Naive thymus-derived CD4-positive, alpha-beta T cell (primary cell): ENCODE measurements at regions of chr15 and their contacts with region 1.

Region 1: DNA sequence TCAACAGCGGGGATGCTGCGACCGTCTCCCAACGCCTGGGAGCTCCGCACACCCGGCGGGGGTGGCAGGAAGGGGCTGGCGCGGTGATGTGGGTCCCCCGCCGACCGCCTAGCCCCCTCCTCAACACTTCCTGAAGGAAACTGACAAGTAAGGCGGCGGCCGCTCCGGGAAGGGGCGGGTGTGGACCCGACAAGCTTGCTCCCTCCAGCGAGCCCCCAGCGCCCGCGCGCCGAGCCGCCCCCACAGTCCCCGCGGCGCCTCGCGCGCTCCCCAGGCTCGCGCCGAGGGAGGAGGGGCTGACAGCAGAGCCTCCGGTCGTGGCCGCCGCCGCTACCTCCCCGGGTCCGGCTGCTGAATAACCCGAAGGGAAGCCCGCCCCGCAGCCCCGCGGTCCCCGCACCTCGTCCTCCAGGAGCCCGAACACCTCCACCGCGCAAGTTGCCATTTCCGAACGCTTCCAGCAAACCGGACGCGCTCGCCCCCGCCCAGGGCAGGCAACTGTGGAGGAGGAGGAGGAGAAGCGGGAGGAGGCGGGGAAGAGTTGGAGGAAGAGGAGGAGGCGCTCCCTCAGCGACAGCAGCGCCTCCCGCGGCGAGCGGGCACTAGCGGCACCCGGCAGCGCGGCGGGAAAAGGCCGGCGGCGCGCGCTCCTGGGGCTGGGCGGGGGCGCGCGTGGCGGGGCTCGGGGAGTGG is at the start of gene NEDD4:
- DNase-seq: peak; percentile 60 to 80 (median 68)
- ATAC-seq: peak; percentile 93
- H3K4me3 ChIP-seq: peak within 1 kb of the TSS; percentile 66
- H3K4me3 Mint-ChIP-seq: peak within 1 kb of the TSS; percentile 85 to 95 (median 90)
- H3K27ac ChIP-seq: no peak within 1 kb of the TSS
- H3K27ac Mint-ChIP-seq: peak within 1 kb of the TSS; percentile 7 to 92 (median 68)
- H3K4me1 ChIP-seq: no peaks in the 10 kb centered on the region
- H3K4me1 Mint-ChIP-seq: peaks cover 8 to 26% (median 18%) of the 10 kb centered on the region in 7 donors
- H3K27me3 ChIP-seq: no peaks in the 10 kb centered on the region
- H3K27me3 Mint-ChIP-seq: peaks cover 0 to 52% (median 0%) of the 10 kb centered on the region in 5 donors
- total RNA-seq, gene NEDD4: 3.3 to 15.1 (median 5.4) TPM

Region 2: DNA sequence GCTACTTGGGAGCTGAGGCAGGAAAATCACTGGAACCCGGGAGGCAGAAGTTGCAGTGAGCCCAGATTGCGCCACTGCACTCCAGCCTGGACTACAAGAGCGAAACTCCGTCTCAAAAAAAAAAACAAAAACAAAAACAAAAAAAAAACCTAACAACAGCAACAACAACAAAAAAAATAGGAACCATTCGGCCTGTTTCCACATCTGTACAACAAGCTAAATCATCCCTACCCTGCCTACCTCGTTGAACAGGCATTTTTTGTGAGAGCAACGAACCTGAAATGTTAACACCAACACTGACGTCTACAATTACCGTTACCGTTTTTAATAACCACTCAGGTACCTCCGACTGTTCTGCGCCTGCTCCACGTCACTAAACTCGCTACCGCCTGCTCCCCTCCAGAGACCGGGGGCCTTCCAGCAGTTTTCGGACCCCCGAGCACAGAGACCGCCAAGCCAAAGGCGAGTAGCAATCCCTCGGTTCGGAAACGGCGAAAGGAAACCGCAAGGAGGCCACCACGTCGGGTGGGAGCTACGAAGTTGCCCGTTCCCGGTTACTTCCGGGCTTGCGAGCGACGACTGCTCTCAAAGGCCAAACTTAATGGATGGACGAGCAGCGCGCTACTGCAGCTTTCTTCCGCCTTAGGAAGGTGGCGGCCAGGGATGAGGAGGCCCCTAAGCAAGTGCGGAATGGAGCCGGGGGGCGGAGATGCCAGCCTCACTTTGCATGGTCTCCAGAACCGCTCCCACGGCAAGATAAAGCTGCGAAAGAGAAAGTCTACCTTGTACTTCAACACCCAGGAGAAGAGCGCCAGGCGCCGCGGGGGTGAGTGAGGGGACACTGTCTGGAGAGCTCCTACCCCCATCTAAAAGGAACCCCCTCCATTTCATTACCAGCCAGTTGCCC is 674.4 kb before region 1 on chr15 and contains the starts of genes PIGB and PIGBOS1:
- CTCF ChIA-PET with region 1: no interaction called
- POLR2A ChIA-PET with region 1: no interaction called
- intact Hi-C with region 1: loop called in 1 of 2 experiments (anchors 10 kb)
- DNase-seq: peak; percentile 73 to 88 (median 84)
- ATAC-seq: peak; percentile 91
- H3K4me3 ChIP-seq: peak within 1 kb of the TSS; percentile 95
- H3K4me3 Mint-ChIP-seq: peak within 1 kb of the TSS; percentile 98 to 99 (median 98)
- H3K27ac ChIP-seq: peak within 1 kb of the TSS; percentile 98
- H3K27ac Mint-ChIP-seq: peak within 1 kb of the TSS; percentile 99 to 100 (median 100)
- H3K4me1 ChIP-seq: peaks cover 5 to 28% of the 10 kb centered on the region in 2 donors
- H3K4me1 Mint-ChIP-seq: peaks cover 41 to 86% (median 76%) of the 10 kb centered on the region in 7 donors
- H3K27me3 ChIP-seq: no peaks in the 10 kb centered on the region
- H3K27me3 Mint-ChIP-seq: no peaks in the 10 kb centered on the region
- total RNA-seq, gene PIGB: 21.4 to 30.2 (median 24.3) TPM
- total RNA-seq, gene PIGBOS1: 8.8 to 21.3 (median 12.5) TPM

Region 3: GRCh38 chr15:55917881-55918296 is 75.4 kb before region 1 on chr15:
- CTCF ChIA-PET with region 1: no interaction called
- POLR2A ChIA-PET with region 1: no interaction called
- intact Hi-C with region 1: no loop called
- DNase-seq: peak in 4 of 9 donors; percentile 3 to 26 (median 14)
- ATAC-seq: no peak
- H3K4me3 ChIP-seq: no peak overlapping the region
- H3K4me3 Mint-ChIP-seq: no peak overlapping the region
- H3K27ac ChIP-seq: no peak overlapping the region
- H3K27ac Mint-ChIP-seq: no peak overlapping the region
- H3K4me1 ChIP-seq: no peaks in the 10 kb centered on the region
- H3K4me1 Mint-ChIP-seq: no peaks in the 10 kb centered on the region
- H3K27me3 ChIP-seq: no peaks in the 10 kb centered on the region
- H3K27me3 Mint-ChIP-seq: no peaks in the 10 kb centered on the region

Region 4: GRCh38 chr15:56040081-56041035 is 47.1 kb after region 1 on chr15:
- CTCF ChIA-PET with region 1: interaction called, 3 read pairs
- POLR2A ChIA-PET with region 1: no interaction called
- intact Hi-C with region 1: loop called (anchors 2 kb)
- DNase-seq: no peak
- ATAC-seq: no peak
- H3K4me3 ChIP-seq: no peak overlapping the region
- H3K4me3 Mint-ChIP-seq: no peak overlapping the region
- H3K27ac ChIP-seq: no peak overlapping the region
- H3K27ac Mint-ChIP-seq: peak overlapping the region in 1 of 9 donors; percentile 26
- H3K4me1 ChIP-seq: peaks cover 20 to 24% of the 10 kb centered on the region in 2 donors
- H3K4me1 Mint-ChIP-seq: peaks cover 8 to 62% (median 46%) of the 10 kb centered on the region in 7 donors
- H3K27me3 ChIP-seq: no peaks in the 10 kb centered on the region
- H3K27me3 Mint-ChIP-seq: peaks cover 0 to 2% (median 0%) of the 10 kb centered on the region in 5 donors

Region 5: GRCh38 chr15:56105855-56106254 is 112.6 kb after region 1 on chr15:
- CTCF ChIA-PET with region 1: no interaction called
- POLR2A ChIA-PET with region 1: no interaction called
- intact Hi-C with region 1: no loop called
- DNase-seq: no peak
- ATAC-seq: no peak
- H3K4me3 ChIP-seq: no peak overlapping the region
- H3K4me3 Mint-ChIP-seq: no peak overlapping the region
- H3K27ac ChIP-seq: no peak overlapping the region
- H3K27ac Mint-ChIP-seq: peak overlapping the region in 1 of 9 donors; percentile 8
- H3K4me1 ChIP-seq: no peaks in the 10 kb centered on the region
- H3K4me1 Mint-ChIP-seq: peaks cover 0 to 10% (median 3%) of the 10 kb centered on the region in 7 donors
- H3K27me3 ChIP-seq: no peaks in the 10 kb centered on the region
- H3K27me3 Mint-ChIP-seq: no peaks in the 10 kb centered on the region

Region 6: DNA sequence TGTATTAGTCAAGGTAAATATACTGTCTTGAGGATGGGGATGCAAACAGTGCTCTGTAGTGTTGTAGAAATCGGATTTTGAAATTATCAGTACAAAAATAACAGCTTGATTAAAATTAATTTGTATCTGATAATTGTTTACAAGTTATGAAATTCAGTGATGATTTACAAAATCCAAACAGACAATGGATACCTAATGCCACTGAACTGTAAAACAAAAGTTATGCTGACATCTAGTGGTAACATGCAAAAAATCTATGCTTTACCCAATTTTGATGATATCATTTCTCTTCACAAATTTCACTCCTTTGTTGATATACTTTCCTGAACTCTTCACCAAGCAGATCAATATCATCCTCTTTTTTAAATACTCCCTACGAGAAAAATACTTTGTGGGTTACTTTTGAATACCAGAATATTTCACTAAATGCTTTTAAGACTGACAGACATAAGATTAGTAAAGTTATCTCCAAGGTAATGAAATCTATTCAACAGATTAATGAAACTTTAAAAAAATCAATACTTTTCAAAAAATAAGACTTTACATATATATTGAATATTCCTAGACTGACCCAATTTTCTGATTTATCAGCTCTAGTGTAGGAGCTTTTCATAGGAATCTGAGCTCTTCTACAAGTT is 435.7 kb after region 1 on chr15:
- CTCF ChIA-PET with region 1: no interaction called
- POLR2A ChIA-PET with region 1: no interaction called
- intact Hi-C with region 1: loop called in 1 of 2 experiments (anchors 10 kb)
- DNase-seq: peak in 3 of 9 donors; percentile 4 to 15 (median 5)
- ATAC-seq: no peak
- H3K4me3 ChIP-seq: no peak overlapping the region
- H3K4me3 Mint-ChIP-seq: no peak overlapping the region
- H3K27ac ChIP-seq: no peak overlapping the region
- H3K27ac Mint-ChIP-seq: no peak overlapping the region
- H3K4me1 ChIP-seq: no peaks in the 10 kb centered on the region
- H3K4me1 Mint-ChIP-seq: no peaks in the 10 kb centered on the region
- H3K27me3 ChIP-seq: peaks cover 0 to 5% of the 10 kb centered on the region in 2 donors
- H3K27me3 Mint-ChIP-seq: peaks cover 0 to 20% (median 9%) of the 10 kb centered on the region in 5 donors

Region 7: GRCh38 chr15:57706405-57707209 is 1713.3 kb after region 1 on chr15 and contains the start of gene POLR2M:
- CTCF ChIA-PET with region 1: no interaction called
- POLR2A ChIA-PET with region 1: no interaction called
- intact Hi-C with region 1: loop called in 1 of 2 experiments (anchors 5 kb)
- DNase-seq: peak; percentile 67 to 97 (median 91)
- ATAC-seq: peak; percentile 94
- H3K4me3 ChIP-seq: peak within 1 kb of the TSS; percentile 88
- H3K4me3 Mint-ChIP-seq: peak within 1 kb of the TSS; percentile 83 to 93 (median 89)
- H3K27ac ChIP-seq: peak within 1 kb of the TSS; percentile 92
- H3K27ac Mint-ChIP-seq: peak within 1 kb of the TSS; percentile 63 to 99 (median 97)
- H3K4me1 ChIP-seq: peaks cover 17 to 38% of the 10 kb centered on the region in 2 donors
- H3K4me1 Mint-ChIP-seq: peaks cover 51 to 96% (median 94%) of the 10 kb centered on the region in 7 donors
- H3K27me3 ChIP-seq: no peaks in the 10 kb centered on the region
- H3K27me3 Mint-ChIP-seq: peaks cover 0 to 3% (median 0%) of the 10 kb centered on the region in 5 donors
- total RNA-seq, gene POLR2M: 67.0 to 105 (median 82.9) TPM